Endothelial cell of umbilical vein (primary cell): ENCODE measurements at regions of chr15 and their contacts with region 1.

Region 1: GRCh38 chr15:100043015-100043641 is 298.6 kb downstream of the ADAMTS17 start:
- DNase-seq: peak; percentile 71
- H3K4me3 ChIP-seq: peak overlapping the region in 1 of 3 experiments; percentile 22
- H3K27ac ChIP-seq: peak overlapping the region; percentile 72
- H3K4me1 ChIP-seq: peaks cover 18% of the 10 kb centered on the region
- H3K27me3 ChIP-seq: no peaks in the 10 kb centered on the region
- CTCF ChIP-seq: no peak
- POLR2A ChIP-seq: no peak

Region 2: GRCh38 chr15:99749386-99749785 is 293.7 kb before region 1 on chr15:
- CTCF ChIA-PET with region 1: no interaction called
- POLR2A ChIA-PET with region 1: no interaction called
- dilution Hi-C with region 1: no loop called
- intact Hi-C with region 1: no loop called
- DNase-seq: no peak
- H3K4me3 ChIP-seq: no peak overlapping the region
- H3K27ac ChIP-seq: no peak overlapping the region
- H3K4me1 ChIP-seq: peaks cover 9% of the 10 kb centered on the region
- H3K27me3 ChIP-seq: no peaks in the 10 kb centered on the region
- CTCF ChIP-seq: no peak
- POLR2A ChIP-seq: no peak

Region 3: DNA sequence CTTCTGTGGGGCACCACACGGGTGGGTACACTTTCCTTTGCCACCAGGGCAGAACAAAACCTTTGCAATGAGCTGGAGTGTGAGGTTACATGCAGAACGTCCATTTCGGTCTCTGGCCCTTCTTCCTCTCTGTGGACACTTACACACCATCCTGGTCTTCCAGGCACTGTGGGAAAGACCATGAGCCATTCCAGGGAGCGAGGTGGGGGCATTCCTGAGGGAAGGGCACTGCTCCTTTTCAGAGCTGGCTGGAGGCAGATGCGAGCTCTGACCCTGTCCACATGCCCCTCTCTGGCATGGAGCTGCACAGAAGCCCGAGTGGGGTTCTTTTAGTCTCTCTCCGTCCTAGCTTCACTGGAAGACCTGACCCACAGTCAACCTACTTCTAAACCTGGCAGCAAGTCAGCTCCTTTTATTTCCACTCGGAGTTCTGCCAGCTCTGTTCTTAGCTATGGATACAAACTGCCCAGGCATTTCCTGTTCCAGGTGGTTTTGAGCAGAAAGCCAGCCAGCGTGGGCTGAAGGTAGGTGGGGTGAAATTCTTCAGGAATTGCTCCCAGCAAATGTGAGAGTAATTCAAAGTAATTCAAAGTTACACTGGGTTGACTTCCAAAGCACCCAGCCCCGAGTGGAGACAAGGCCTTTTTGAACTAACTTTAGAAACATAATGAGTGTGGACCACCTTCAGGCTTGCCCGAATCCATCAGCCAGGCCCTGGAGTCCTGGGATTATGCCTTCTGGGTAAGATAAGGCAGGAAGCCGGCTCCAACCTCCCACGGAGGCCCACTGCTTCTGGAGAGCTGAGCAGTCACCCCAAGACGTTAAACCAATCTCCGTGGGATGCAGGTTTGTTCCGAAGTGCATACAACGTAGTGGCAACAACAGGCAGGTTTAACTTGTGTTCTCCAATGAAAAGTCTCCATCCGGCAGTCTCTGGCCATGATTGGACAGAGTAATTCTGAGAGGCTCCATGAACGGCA is 17.4 kb after region 1 on chr15:
- CTCF ChIA-PET with region 1: no interaction called
- POLR2A ChIA-PET with region 1: no interaction called
- dilution Hi-C with region 1: no loop called
- intact Hi-C with region 1: no loop called
- DNase-seq: peak; percentile 9
- H3K4me3 ChIP-seq: no peak overlapping the region
- H3K27ac ChIP-seq: no peak overlapping the region
- H3K4me1 ChIP-seq: no peaks in the 10 kb centered on the region
- H3K27me3 ChIP-seq: no peaks in the 10 kb centered on the region
- CTCF ChIP-seq: no peak
- POLR2A ChIP-seq: no peak

Region 4: GRCh38 chr15:100341662-100342560 is 298.8 kb after region 1 on chr15 and contains the start of gene ADAMTS17:
- CTCF ChIA-PET with region 1: no interaction called
- POLR2A ChIA-PET with region 1: no interaction called
- dilution Hi-C with region 1: no loop called
- intact Hi-C with region 1: loop called (anchors 1 kb)
- DNase-seq: peak; percentile 92
- H3K4me3 ChIP-seq: peak within 1 kb of the TSS; percentile 16 to 36 (median 35)
- H3K27ac ChIP-seq: no peak within 1 kb of the TSS
- H3K4me1 ChIP-seq: peaks cover 4% of the 10 kb centered on the region
- H3K27me3 ChIP-seq: peaks cover 2 to 12% of the 10 kb centered on the region in 2 experiments
- CTCF ChIP-seq: peak; percentile 79 to 91
- POLR2A ChIP-seq: no peak
- total RNA-seq, gene ADAMTS17: not detected in 2 replicates

Region 5: GRCh38 chr15:100602064-100602822 is 559.1 kb after region 1 on chr15 and contains the starts of genes ASB7 and LINS1:
- CTCF ChIA-PET with region 1: no interaction called
- POLR2A ChIA-PET with region 1: no interaction called
- dilution Hi-C with region 1: no loop called
- intact Hi-C with region 1: loop called (anchors 10 kb)
- DNase-seq: peak; percentile 100
- H3K4me3 ChIP-seq: peak within 1 kb of the TSS; percentile 84 to 99 (median 96)
- H3K27ac ChIP-seq: peak within 1 kb of the TSS; percentile 71
- H3K4me1 ChIP-seq: peaks cover 21% of the 10 kb centered on the region
- H3K27me3 ChIP-seq: no peaks in the 10 kb centered on the region
- CTCF ChIP-seq: no peak
- POLR2A ChIP-seq: no peak
- total RNA-seq, gene ASB7: 13.0 and 13.3 TPM in 2 replicates
- total RNA-seq, gene LINS1: 9.6 and 14.7 TPM in 2 replicates